Activated B cell treated with CpG ODN at 0.5 μM for 24 hours (primary cell): ENCODE measurements at regions of chr4 and their contacts with region 1.

Region 1: DNA sequence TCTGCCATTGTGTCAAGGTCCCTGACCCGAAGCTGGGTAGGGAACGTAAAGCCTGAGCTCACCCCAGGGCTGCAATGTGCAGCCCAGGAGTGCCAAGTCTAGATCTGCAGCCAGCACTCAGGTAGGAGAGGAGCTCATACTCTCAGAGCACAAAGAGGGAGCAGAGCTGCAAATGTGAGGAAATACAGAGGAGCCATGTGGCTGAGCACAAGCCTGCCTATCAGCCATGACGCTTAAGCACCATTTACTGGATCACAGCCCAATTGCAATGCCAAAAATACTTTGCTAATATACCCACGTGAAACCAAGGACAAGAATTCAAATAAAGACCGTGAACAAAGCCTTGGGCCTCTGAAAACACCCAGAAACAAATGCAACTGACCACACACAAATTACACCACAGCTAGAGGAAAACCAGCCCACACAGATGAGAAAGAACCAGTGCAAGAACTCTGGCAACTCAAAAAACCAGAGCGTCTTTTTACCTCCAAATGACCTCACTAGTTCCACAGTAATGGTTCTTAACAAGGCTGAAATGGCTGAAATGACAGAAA is 69.0 kb upstream of the HPF1 start:
- DNase-seq: no peak
- ATAC-seq: no peak
- H3K4me3 Mint-ChIP-seq: no peak overlapping the region
- H3K27ac Mint-ChIP-seq: no peak overlapping the region
- H3K4me1 Mint-ChIP-seq: no peaks in the 10 kb centered on the region
- H3K27me3 Mint-ChIP-seq: peaks cover 8% of the 10 kb centered on the region
- CTCF ChIP-seq: no peak

Region 2: GRCh38 chr4:169890906-169891305 is 64.2 kb after region 1 on chr4:
- CTCF ChIA-PET with region 1: no interaction called
- POLR2A ChIA-PET with region 1: no interaction called
- intact Hi-C with region 1: no loop called
- DNase-seq: no peak
- ATAC-seq: no peak
- H3K4me3 Mint-ChIP-seq: no peak overlapping the region
- H3K27ac Mint-ChIP-seq: no peak overlapping the region
- H3K4me1 Mint-ChIP-seq: no peaks in the 10 kb centered on the region
- H3K27me3 Mint-ChIP-seq: no peaks in the 10 kb centered on the region
- CTCF ChIP-seq: no peak

Region 3: DNA sequence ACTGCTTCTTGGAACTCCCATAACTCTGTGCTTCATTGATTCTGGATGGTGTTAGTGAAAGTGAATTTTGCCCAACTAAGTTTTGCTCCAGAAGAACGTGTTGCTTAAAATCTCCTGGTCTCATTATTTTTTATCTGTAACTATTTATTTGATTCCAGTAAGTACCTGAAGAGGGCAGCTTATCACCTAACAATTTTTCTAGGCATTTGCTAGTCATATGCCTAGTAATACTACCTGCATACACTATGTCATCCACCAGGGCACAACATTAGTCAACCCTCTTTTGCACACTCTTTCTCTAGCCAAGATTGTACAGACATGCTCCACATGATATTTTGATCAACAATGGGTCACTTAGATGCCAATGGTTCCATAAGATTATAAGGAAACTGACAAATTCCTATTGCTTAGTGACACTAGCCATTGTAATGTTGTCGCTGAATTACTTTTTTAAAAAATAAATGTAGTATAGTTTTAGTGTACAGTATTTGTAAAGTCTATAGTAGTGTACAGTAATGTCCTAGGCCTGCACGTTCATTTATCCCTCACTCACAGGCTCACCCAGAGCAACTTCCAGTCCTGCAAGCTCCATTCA is 763.0 kb after region 1 on chr4:
- CTCF ChIA-PET with region 1: no interaction called
- POLR2A ChIA-PET with region 1: no interaction called
- intact Hi-C with region 1: loop called (anchors 10 kb)
- DNase-seq: no peak
- ATAC-seq: no peak
- H3K4me3 Mint-ChIP-seq: no peak overlapping the region
- H3K27ac Mint-ChIP-seq: no peak overlapping the region
- H3K4me1 Mint-ChIP-seq: no peaks in the 10 kb centered on the region
- H3K27me3 Mint-ChIP-seq: no peaks in the 10 kb centered on the region
- CTCF ChIP-seq: no peak